ENCODE measurements at regions of chr10 and their contacts with region 1.

Region 1: DNA sequence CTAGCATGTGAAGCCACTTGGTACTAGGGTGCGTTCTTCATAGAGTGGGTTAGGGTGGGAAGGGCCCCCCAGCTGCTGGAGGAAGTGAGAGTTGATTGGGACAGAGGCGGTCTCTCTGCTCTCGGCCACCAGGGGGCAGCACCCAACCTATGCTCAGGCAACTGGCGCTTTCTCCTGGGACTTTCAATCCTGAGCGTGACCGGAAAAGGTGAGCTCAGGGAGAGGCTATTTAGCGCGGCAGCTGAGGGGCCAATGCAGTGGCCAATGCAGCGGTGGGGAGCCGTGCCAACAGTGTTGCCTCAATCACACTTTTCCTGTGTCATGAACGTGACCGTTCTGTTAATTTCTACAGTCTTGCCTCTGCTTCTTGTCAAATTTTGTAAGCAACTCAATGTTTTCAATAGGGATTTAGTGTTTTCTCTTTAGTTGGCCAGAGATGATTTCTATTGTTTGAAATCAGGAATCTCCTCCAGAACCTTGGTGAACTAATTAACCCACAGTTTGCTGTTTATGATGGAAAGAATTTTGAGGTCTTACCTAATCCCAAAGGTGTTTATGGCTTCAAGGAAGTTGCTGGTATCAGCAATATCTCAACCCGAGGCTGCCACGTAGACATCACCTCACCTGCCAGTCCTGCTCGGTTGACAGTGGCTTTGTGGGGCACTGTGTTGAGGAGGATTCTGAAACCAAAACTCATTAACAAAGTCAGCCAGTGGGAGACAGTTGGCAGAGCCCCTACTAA is 67.9 kb upstream of the PDZD8 start:
- DNase-seq: peak; percentile 90 to 96
- ATAC-seq: peak; percentile 86
- H3K4me3 ChIP-seq: no peak overlapping the region
- H3K27ac ChIP-seq: no peak overlapping the region
- H3K4me1 ChIP-seq: no peaks in the 10 kb centered on the region
- H3K27me3 ChIP-seq: no peaks in the 10 kb centered on the region

Region 2: GRCh38 chr10:117375360-117376178 is 67.5 kb before region 1 on chr10 and contains the start of gene PDZD8:
- intact Hi-C with region 1: loop called in 1 of 2 experiments (anchors 5 kb)
- DNase-seq: peak; percentile 97 to 98
- ATAC-seq: peak; percentile 98
- H3K4me3 ChIP-seq: peak within 1 kb of the TSS; percentile 74 to 83
- H3K27ac ChIP-seq: peak within 1 kb of the TSS; percentile 59 to 91
- H3K4me1 ChIP-seq: peaks cover 1 to 3% of the 10 kb centered on the region in 2 donors
- H3K27me3 ChIP-seq: no peaks in the 10 kb centered on the region
- total RNA-seq, gene PDZD8: 35.5 to 36.0 TPM

Region 3: DNA sequence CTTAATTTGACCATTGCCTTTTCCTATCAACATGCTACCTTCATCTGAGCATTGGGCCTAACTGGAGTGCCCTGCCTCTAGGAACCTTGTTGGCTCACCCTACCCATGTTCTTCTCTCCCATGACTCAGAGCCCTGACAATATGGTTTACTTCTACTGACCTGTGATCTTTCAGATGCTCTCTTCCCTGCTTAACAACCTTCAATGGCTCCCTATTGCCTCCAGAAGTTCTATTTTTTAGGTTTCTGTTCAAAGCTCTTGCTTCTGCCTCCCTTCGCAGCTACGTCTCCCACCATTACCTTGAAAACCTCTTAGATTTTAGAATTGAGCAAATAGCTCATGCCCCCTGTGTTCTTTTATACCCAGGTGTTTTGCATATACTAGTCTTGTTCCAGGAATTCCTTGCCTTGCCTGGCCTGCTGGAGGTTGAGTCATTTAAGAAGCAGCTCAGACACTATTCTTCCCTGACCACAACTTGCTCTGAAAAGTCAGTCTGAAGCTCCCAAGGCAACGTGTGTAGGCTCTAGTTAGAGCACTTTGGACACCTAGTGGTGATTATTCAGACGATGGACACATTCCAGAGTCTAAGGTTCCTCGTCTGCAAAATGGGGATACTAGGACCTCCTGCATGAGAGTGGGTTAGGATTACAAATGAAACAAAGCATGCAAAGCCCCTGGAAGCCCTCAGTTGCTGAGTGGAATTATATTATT is 35.0 kb after region 1 on chr10:
- intact Hi-C with region 1: loop called in 1 of 2 experiments (anchors 5 kb)
- DNase-seq: no peak
- ATAC-seq: peak; percentile 45
- H3K4me3 ChIP-seq: no peak overlapping the region
- H3K27ac ChIP-seq: no peak overlapping the region
- H3K4me1 ChIP-seq: peaks cover 0 to 3% of the 10 kb centered on the region in 2 donors
- H3K27me3 ChIP-seq: no peaks in the 10 kb centered on the region

Region 4: GRCh38 chr10:117568334-117568733 is 125.2 kb after region 1 on chr10:
- intact Hi-C with region 1: no loop called
- DNase-seq: no peak
- ATAC-seq: no peak
- H3K4me3 ChIP-seq: no peak overlapping the region
- H3K27ac ChIP-seq: no peak overlapping the region
- H3K4me1 ChIP-seq: no peaks in the 10 kb centered on the region
- H3K27me3 ChIP-seq: peaks cover 0 to 2% of the 10 kb centered on the region in 2 donors